Activated T-helper 2 cell treated with anti-CD3 and anti-CD28 coated beads, Interferon-gamma antibody, Interleukin-2, Interleukin-4, amounts not matched to agents 10 μg/mL and 5 μg/mL and 100 μg/mL, durations not matched to agents 14 hours and 24 hours and 36 hours (primary cell): ENCODE measurements at regions of chr7 and their contacts with region 1.

Region 1: GRCh38 chr7:55951637-55952351 is at the start of gene MRPS17:
- DNase-seq: peak; percentile 89
- H3K4me3 Mint-ChIP-seq: peak within 1 kb of the TSS; percentile 90
- H3K27ac Mint-ChIP-seq: peak within 1 kb of the TSS; percentile 90
- H3K4me1 Mint-ChIP-seq: peaks cover 8% of the 10 kb centered on the region
- H3K27me3 Mint-ChIP-seq: no peaks in the 10 kb centered on the region
- total RNA-seq, gene MRPS17: 28.3 and 29.4 TPM in 2 replicates

Region 2: GRCh38 chr7:55887821-55888247 is 64.0 kb before region 1 on chr7:
- intact Hi-C with region 1: loop called (anchors 2 kb)
- DNase-seq: no peak
- H3K4me3 Mint-ChIP-seq: peak overlapping the region; percentile 81
- H3K27ac Mint-ChIP-seq: peak overlapping the region; percentile 74
- H3K4me1 Mint-ChIP-seq: peaks cover 4% of the 10 kb centered on the region
- H3K27me3 Mint-ChIP-seq: no peaks in the 10 kb centered on the region

Region 3: DNA sequence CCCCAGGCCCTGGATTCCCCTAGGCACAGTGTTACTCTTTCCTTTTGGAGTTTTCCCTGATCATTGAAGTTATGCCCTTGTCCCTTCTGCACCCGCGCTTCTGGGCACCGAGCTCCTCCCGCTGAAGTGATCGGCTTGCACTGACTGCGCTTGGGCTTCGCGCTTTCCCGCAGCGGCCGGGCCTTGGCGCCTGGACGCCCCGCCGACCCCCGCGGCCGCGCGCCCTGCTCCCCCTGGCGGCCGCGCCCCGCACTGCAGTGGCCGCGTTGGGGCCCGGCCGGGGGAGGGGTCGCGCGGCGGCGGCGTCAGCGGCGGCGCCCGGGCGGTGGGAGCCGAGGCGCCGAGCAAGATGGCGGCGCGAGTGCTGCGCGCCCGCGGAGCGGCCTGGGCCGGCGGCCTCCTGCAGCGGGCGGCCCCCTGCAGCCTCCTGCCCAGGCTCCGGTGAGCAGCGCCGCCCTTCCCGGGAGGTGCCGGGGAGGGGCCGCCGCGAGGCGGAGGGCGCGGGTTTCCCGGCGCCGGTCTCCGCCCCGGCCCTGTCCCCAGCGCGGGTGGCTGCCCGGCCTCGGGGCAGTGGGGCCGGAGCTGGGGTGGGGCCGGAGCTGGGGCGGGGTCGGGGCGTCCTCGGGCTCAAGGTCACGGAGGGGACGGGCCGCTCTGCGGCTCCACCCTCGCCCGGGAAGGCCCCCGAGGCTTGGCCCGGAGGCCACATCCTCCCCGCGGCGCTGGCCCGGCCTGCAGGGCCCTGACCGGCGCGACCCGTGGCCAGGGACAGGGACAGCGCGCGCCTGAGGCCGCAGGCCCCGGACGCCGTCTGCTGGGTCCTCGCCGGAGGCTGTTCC is 12.7 kb after region 1 on chr7 and contains the start of gene NIPSNAP2:
- intact Hi-C with region 1: loop called (anchors 1 kb)
- DNase-seq: peak; percentile 55
- H3K4me3 Mint-ChIP-seq: peak within 1 kb of the TSS; percentile 86
- H3K27ac Mint-ChIP-seq: peak within 1 kb of the TSS; percentile 73
- H3K4me1 Mint-ChIP-seq: peaks cover 10% of the 10 kb centered on the region
- H3K27me3 Mint-ChIP-seq: no peaks in the 10 kb centered on the region
- total RNA-seq, gene NIPSNAP2: 52.3 and 56.3 TPM in 2 replicates

Region 4: DNA sequence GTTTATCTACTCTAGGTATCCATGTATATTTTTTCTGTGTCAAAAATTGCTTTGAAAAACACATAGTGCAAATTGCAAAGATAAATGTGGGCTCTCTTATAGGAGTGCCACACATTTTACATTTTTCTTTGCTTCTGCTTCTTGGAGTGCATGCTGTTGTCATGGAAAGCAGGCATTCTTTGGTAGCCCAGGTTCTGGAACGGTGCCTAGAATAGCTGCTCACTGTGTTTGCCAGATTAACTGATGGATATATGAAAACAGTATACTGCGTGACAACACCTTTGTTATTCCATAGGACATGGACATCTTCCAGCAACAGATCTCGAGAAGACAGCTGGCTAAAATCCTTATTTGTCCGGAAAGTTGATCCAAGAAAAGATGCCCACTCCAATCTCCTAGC is 26.0 kb after region 1 on chr7:
- intact Hi-C with region 1: no loop called
- DNase-seq: no peak
- H3K4me3 Mint-ChIP-seq: no peak overlapping the region
- H3K27ac Mint-ChIP-seq: no peak overlapping the region
- H3K4me1 Mint-ChIP-seq: no peaks in the 10 kb centered on the region
- H3K27me3 Mint-ChIP-seq: no peaks in the 10 kb centered on the region

Region 5: DNA sequence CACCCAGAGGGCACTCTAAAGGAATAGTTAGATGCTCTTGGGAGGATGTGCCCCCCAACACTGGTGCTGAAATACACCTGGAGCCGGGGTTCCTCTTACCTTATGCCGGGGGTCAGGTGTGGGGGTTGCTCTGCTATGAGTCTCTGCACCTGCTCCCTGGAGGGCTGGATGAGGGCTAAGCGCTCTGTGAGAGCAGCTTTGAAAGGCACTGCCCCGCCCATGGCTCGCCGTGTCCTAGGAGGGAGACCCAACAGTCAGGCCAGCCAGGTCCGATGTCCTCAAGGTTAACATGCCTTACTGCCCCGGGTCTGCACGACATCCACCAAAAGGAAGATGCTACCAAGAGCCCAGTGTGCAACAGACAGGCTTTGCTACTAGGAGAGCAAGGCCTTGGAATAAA is 67.7 kb after region 1 on chr7:
- intact Hi-C with region 1: no loop called
- DNase-seq: no peak
- H3K4me3 Mint-ChIP-seq: no peak overlapping the region
- H3K27ac Mint-ChIP-seq: no peak overlapping the region
- H3K4me1 Mint-ChIP-seq: no peaks in the 10 kb centered on the region
- H3K27me3 Mint-ChIP-seq: no peaks in the 10 kb centered on the region

Region 6: DNA sequence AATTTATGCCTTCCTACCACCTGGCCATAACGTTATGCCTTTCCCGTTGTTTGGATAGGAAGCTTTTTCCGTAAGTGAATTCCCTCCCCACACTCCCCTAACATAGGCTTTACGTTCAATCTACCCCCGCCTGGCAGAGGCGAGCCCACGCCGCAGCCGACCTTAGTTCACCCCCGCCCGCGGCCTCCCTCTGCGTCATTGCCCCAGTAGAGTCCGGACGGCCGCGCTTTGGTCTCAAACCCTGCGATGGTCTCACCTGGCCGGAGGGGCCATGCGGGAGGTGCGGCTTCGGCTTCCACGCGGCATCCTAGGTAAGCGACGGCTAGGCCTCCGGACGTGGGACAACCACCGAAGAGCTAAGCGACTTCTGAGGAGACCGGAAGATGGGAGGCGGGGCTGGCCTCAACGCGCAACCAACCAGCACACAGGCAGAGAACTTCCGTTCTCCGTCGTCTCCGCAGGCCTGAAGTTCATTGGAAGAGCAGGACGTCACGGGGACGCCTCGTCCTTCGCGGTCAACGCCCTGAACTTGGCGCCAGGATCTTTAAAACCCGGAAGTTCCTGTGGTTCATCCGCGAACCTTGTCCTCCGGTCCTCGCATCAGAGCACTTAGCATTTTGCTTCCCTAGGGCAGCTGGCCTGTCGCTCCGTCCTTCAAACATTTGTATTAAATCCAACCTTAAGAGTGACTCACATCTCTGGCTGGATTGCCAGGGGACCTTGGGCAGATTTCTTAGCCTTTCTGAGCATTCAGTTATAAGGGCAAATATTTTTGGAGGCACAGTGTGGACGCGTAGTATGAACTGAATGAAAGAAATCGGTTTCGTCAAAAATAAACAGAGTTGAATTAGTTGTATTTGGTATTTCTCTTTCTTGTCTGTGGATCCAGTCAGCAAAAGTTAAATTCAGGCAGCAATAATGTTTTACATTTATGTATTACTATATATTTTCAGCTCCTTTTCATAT is 154.6 kb after region 1 on chr7 and contains the start of gene CHCHD2:
- intact Hi-C with region 1: loop called (anchors 2 kb)
- DNase-seq: peak; percentile 93
- H3K4me3 Mint-ChIP-seq: peak within 1 kb of the TSS; percentile 99
- H3K27ac Mint-ChIP-seq: peak within 1 kb of the TSS; percentile 99
- H3K4me1 Mint-ChIP-seq: peaks cover 21% of the 10 kb centered on the region
- H3K27me3 Mint-ChIP-seq: no peaks in the 10 kb centered on the region
- total RNA-seq, gene CHCHD2: 660 TPM in 2 replicates